Thyroid gland (tissue), 4 donors: ENCODE measurements at regions of chr5 and their contacts with region 1.

Region 1: DNA sequence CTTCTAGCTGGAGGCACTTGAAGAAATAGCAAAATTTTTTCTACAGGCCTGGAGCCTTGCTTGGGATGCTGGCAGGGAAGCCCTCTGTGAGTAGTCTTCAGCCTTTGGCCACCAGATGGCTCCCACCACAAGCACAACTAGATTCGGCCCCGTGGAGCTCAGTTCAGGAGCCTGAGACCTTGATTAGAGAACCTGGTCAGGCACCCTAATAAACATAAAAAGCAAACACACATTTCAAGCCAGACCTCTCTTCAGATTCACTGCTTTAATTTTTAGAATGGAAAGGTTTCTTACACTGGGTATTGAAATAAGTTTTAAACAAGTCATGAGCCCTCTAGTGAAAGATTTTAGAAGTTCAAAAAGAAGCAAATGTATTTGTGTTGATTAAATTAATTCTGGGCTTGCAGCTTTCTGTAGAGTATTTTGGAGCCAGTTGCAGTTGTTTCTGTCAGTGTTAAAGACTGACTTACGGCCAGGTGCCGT is 41.4 kb downstream of the GLRX start:
- DNase-seq: peak; percentile 89
- H3K4me3 ChIP-seq: no peak overlapping the region
- H3K27ac ChIP-seq: peak overlapping the region; percentile 57 to 61 (median 60)
- H3K4me1 ChIP-seq: peaks cover 0 to 17% of the 10 kb centered on the region in 2 donors
- H3K27me3 ChIP-seq: no peaks in the 10 kb centered on the region
- CTCF ChIP-seq: peak; percentile 68 to 98 (median 84)
- POLR2A ChIP-seq: no peak

Region 2: DNA sequence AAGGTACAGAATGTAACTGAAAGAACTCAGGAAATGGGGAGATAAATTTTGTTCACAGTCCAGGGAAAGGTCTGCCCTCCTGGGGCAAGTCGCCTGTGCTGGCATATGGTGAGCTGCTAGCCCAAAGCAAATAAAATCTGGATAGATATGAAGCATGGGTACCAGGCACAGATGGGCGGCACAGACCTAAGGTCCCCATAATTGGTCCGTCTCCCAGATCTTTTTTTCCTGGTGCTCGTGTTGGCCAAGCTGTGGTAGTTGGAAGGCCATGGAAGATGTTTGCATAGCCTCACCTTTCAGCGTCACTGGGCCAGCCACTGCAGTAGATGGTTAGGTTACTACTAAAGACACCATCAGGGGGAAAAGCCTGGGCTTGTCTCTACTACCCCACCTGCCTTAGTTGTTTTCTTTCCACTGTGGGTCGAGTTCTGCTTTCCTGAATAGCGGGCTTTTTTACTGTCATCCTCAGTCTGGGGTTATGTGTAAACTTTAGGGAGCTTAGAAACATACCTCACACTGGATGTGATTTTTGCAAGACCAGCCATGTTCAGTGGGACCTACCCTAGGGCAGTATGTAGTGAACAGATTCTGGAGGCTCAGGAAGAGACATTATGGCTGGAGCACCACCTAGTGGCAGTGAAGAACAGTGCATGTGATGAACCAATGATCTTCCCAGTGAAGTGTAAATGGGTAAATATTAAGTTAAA is 65.6 kb after region 1 on chr5:
- intact Hi-C with region 1: loop called (anchors 2 kb)
- DNase-seq: peak; percentile 61 to 71
- H3K4me3 ChIP-seq: no peak overlapping the region
- H3K27ac ChIP-seq: no peak overlapping the region
- H3K4me1 ChIP-seq: peaks cover 8 to 24% of the 10 kb centered on the region in 2 donors
- H3K27me3 ChIP-seq: no peaks in the 10 kb centered on the region
- CTCF ChIP-seq: peak; percentile 78 to 96 (median 92)
- POLR2A ChIP-seq: no peak